ENCODE measurements at regions of chr6 and their contacts with region 1.

Region 1: DNA sequence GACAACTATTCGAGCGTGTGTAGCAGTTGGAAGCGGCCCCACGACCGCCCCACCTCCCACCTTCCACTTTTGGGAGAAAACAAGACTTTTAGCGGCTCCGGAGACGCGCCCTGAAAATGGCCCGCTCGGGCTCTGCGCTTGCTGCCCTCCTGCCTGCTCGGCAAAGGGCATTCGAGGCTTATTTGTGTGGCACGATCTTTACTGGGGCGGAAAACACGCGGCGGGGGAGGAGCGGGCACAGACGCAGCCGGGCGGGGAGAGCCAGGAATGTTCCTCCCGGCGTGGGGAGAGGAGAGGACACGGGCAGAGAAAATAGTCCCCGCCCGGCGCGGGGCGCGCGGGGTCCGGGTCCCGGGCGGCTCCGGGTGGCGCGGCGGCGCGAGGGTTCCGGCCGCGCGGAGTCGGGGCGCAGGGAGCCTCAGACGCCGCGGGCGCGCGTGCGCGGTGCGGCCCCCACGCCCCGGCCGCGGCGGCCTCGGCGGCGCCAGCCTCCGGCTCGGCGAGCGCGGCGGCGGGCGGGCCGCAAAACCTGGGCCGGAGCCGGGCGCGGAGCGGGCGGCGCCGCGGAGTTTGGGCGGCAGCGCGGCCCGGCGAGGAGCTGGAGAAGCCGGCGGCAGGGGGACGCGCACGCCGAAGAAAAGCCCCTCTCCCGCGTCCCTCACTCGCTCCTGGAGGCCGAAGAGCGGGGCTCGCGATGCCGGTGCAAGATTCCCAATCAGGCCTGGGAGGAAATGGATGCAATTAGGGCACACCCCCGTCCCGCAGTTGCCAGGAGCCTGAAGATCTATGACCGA is 90.0 kb upstream of the ARID1B start:
- DNase-seq: peak; percentile 75
- H3K4me3 Mint-ChIP-seq: peak overlapping the region; percentile 92
- H3K27ac Mint-ChIP-seq: peak overlapping the region; percentile 83
- H3K4me1 Mint-ChIP-seq: peaks cover 27% of the 10 kb centered on the region
- H3K27me3 Mint-ChIP-seq: peaks cover 4% of the 10 kb centered on the region

Region 2: GRCh38 chr6:155327326-155328073 is 1359.7 kb before region 1 on chr6:
- intact Hi-C with region 1: loop called (anchors 5 kb)
- DNase-seq: peak; percentile 31
- H3K4me3 Mint-ChIP-seq: no peak overlapping the region
- H3K27ac Mint-ChIP-seq: peak overlapping the region; percentile 51
- H3K4me1 Mint-ChIP-seq: peaks cover 34% of the 10 kb centered on the region
- H3K27me3 Mint-ChIP-seq: no peaks in the 10 kb centered on the region

Region 3: GRCh38 chr6:156464100-156464878 is 222.9 kb before region 1 on chr6:
- intact Hi-C with region 1: no loop called
- DNase-seq: no peak
- H3K4me3 Mint-ChIP-seq: no peak overlapping the region
- H3K27ac Mint-ChIP-seq: no peak overlapping the region
- H3K4me1 Mint-ChIP-seq: no peaks in the 10 kb centered on the region
- H3K27me3 Mint-ChIP-seq: peaks cover 3% of the 10 kb centered on the region

Region 4: DNA sequence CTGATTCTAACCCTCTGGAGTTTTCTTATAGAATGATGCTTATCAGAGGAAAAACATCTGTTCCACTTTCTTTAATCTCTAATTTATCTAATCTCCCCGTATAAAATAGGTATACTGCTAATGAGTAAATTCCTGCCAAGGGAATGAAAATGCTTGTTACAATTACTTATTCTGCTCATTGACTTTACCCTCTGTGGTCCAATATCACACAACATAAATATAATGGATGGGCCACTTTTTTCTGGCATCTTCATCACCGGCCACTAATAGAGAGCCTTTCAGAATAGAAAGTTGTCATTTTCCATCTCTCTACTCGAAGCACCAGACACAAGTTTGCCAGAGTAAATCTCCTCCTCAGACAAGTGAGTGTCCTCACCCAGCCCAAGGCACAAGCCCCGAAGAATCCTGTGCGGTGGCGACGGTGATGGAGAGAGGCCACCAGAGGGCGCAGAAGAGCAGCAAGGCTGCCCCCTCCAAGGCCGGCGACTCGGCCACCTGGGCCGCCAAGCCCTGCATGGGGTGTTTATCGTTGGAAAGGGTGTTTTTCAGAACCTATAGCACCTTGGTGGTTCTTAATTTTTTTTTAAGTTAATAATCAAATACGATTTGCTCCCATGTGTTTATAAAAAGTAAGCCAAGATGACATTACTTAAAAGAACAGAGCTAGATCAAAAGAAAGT is 122.9 kb before region 1 on chr6:
- intact Hi-C with region 1: loop called (anchors 2 kb)
- DNase-seq: peak; percentile 65
- H3K4me3 Mint-ChIP-seq: no peak overlapping the region
- H3K27ac Mint-ChIP-seq: no peak overlapping the region
- H3K4me1 Mint-ChIP-seq: peaks cover 7% of the 10 kb centered on the region
- H3K27me3 Mint-ChIP-seq: peaks cover 3% of the 10 kb centered on the region

Region 5: GRCh38 chr6:156645097-156645496 is 42.1 kb before region 1 on chr6:
- intact Hi-C with region 1: no loop called
- DNase-seq: no peak
- H3K4me3 Mint-ChIP-seq: no peak overlapping the region
- H3K27ac Mint-ChIP-seq: no peak overlapping the region
- H3K4me1 Mint-ChIP-seq: peaks cover 11% of the 10 kb centered on the region
- H3K27me3 Mint-ChIP-seq: peaks cover 24% of the 10 kb centered on the region

Region 6: DNA sequence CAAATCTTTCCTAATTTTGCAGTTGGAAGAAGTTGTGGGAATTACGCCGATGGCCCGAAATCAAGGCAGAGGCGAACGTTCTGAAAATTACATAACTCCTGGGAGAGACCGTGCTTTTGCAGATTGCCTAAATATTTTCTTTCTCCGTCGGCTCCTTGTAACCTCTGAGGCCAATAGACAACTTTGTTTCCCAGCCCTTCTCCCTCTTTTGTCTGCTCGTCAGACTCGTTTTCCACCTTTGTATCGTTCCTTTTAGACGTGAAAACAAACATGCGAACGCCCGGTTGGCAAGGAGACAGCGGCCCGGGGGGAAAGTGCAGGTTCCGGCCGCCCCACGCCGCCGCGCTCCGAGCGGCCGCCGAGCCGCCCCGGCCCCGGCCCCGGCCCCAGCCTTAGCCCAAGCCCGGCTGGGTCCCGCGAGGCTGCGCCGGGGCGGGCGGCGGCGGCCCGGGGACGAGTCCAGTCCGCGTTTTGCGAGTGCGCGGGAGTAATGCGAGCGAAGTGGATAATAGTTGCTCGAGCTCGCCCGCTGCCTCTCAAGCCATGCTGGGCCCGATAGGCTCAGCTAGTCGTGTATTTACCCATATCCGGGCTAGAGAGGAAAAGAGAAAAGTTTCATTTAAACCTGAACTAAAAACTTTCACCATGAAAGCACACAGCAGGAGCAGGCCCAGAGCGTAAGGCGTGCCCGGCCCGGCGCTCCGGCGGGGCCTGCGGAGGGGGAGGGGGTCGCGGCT is 89.8 kb after region 1 on chr6 and contains the start of gene ARID1B:
- intact Hi-C with region 1: loop called (anchors 1 kb)
- DNase-seq: peak; percentile 75
- H3K4me3 Mint-ChIP-seq: peak within 1 kb of the TSS; percentile 97
- H3K27ac Mint-ChIP-seq: peak within 1 kb of the TSS; percentile 98
- H3K4me1 Mint-ChIP-seq: peaks cover 52% of the 10 kb centered on the region
- H3K27me3 Mint-ChIP-seq: peaks cover 3% of the 10 kb centered on the region
- total RNA-seq, gene ARID1B: 73.6 and 79.1 TPM in 2 replicates

Region 7: DNA sequence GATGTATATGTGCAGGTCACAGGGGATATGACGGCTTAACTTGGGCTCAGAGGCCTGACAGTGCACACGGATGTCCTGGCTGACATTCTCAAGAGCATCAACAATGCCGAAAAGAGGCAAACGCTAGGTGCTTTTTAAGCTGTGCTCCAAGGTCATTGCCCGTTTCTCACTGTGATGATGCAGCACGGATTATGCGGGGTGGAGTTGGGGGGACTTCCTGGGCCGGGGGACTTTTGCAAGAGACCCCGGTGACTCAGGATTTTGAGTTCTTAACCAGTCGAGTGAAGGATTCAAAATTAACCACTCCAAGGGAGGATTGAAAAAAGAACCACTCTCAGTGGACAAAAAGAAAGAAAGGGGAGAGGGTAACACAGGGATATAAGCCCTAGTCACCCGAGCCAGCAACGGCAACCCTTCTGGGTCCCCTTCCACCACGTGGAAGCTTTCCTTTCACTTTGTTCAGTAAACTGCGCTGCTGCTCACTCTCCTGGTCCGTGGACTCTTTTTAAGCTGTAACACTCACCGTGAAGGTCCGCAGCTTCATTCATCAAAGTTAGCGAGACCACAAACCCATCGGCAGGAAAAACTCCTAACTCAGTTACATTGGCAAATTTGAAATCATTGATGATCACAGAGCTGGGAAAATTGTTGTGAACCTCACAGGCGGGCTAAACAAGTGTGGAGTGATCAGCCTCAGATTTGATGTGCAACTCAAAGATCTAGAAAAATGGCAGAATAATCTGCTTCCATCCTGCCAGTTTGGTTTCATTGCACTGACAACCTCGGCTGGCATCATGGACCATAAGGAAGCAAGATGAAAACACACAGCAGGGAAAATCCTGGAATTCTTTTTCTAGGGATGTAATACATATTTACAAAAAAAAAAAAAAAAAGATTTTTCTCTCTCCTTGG is 289.3 kb after region 1 on chr6:
- intact Hi-C with region 1: loop called (anchors 5 kb)
- DNase-seq: no peak
- H3K4me3 Mint-ChIP-seq: peak overlapping the region; percentile 76
- H3K27ac Mint-ChIP-seq: peak overlapping the region; percentile 64
- H3K4me1 Mint-ChIP-seq: peaks cover 57% of the 10 kb centered on the region
- H3K27me3 Mint-ChIP-seq: peaks cover 2% of the 10 kb centered on the region

Region 8: DNA sequence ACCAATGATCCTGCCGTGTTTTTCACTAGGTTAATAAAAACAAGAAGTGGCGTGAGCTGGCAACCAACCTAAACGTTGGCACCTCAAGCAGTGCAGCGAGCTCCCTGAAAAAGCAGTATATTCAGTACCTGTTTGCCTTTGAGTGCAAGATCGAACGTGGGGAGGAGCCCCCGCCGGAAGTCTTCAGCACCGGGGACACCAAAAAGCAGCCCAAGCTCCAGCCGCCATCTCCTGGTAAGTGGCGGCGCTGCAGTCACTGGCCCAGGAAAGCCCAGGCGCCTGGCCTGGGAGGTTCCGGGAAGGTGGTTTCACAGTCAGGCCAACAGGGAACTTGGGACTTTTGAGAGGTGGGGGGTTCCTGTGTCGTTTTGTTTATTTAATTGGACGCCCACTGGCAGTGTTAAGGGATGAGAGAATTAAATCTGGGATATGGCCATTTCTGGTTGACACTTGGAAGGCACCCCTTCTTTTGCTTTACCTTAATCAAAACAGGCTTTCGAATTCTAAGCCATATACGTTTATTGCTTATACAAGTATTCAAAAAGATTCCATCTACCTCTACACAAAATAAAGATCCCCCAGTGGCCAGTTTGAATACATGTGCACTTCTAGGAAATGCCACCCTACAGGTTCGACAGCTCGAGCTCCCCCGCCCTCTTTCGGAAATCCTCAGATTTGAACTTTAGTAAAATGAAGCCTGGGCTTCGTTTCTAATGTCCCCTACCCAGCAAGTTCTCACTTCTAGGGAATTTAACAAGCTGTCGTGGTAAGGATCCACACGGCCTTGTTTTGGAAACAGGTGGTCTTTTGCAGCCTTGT is 497.2 kb after region 1 on chr6:
- intact Hi-C with region 1: loop called (anchors 2 kb)
- DNase-seq: peak; percentile 37
- H3K4me3 Mint-ChIP-seq: no peak overlapping the region
- H3K27ac Mint-ChIP-seq: peak overlapping the region; percentile 64
- H3K4me1 Mint-ChIP-seq: peaks cover 25% of the 10 kb centered on the region
- H3K27me3 Mint-ChIP-seq: no peaks in the 10 kb centered on the region

Region 9: GRCh38 chr6:157274471-157275226 is 587.5 kb after region 1 on chr6:
- intact Hi-C with region 1: loop called (anchors 1 kb)
- DNase-seq: peak; percentile 78
- H3K4me3 Mint-ChIP-seq: peak overlapping the region; percentile 86
- H3K27ac Mint-ChIP-seq: peak overlapping the region; percentile 67
- H3K4me1 Mint-ChIP-seq: peaks cover 4% of the 10 kb centered on the region
- H3K27me3 Mint-ChIP-seq: peaks cover 10% of the 10 kb centered on the region

Measured in activated T-helper 1 cell treated with anti-CD3 and anti-CD28 coated beads, Interleukin-12 subunit alpha, Interleukin-12 subunit beta, Interleukin-2, Interleukin-4 antibody, amounts not matched to agents 30 ng/mL and 10 ng/mL and 1 ng/mL, durations not matched to agents 14 hours and 24 hours and 36 hours (primary cell).